Ascending aorta (tissue), 2 donors: ENCODE measurements at regions of chr17 and their contacts with region 1.

Region 1: GRCh38 chr17:75978938-75979704 is at the starts of genes ACOX1 and TEN1:
- DNase-seq: peak; percentile 89 to 98
- H3K4me3 ChIP-seq: peak within 1 kb of the TSS; percentile 76 to 88
- H3K27ac ChIP-seq: peak within 1 kb of the TSS; percentile 93 to 99
- H3K4me1 ChIP-seq: peaks cover 2 to 26% of the 10 kb centered on the region in 2 donors
- H3K27me3 ChIP-seq: no peaks in the 10 kb centered on the region
- CTCF ChIP-seq: peak; percentile 15 to 35 (median 33)
- total RNA-seq, gene ACOX1: 18.5 TPM
- total RNA-seq, gene TEN1: 33.6 TPM

Region 2: DNA sequence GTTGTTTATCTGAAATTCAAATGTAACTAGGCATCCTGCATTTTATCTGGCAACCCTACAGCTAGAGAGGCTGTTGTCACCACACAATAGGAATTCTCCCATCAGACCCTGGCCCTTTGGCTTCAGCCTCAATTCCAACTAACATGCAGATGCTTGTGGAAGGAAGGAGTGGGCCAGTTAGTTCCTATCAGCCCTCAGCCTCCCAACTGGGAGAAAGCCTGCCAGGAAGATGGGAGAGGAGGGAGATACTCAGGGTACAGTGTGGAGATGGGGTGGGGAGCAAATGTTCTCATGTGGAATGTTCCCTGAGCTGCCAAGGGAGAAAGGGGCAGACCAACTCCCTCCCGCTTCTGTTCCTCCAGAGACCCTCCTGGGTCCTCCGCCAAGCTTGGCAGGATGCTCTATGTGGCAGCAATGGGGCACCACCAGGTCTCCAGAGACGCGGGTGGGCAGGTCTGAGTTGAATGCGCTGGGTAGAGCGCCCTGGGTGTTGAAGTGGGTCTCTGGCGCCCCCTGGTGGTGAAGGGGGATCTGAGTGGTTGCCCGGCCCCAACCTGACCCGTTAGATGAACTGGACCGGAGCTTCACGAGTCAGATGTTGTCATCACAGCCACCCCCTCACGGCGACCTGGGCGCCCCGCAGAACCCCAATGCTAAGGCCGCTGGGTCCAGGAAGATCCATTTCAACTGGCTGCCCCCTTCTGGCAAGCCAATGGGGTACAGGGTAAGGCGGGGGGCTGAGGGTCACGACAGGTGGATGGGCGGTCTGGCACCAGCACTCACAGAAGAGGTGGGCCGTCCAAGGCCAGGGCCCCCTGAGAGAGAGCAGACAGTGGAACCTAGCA is 229.4 kb before region 1 on chr17:
- intact Hi-C with region 1: loop called (anchors 5 kb)
- DNase-seq: peak; percentile 59 to 92
- H3K4me3 ChIP-seq: peak overlapping the region in 1 of 2 donors; percentile 2
- H3K27ac ChIP-seq: no peak overlapping the region
- H3K4me1 ChIP-seq: peaks cover 10 to 11% of the 10 kb centered on the region in 2 donors
- H3K27me3 ChIP-seq: no peaks in the 10 kb centered on the region
- CTCF ChIP-seq: peak; percentile 88 to 96 (median 90)

Region 3: GRCh38 chr17:75896415-75897159 is 82.5 kb before region 1 on chr17 and contains the start of gene TRIM65:
- intact Hi-C with region 1: loop called (anchors 2 kb)
- DNase-seq: peak; percentile 41 to 94
- H3K4me3 ChIP-seq: peak within 1 kb of the TSS; percentile 87 to 96
- H3K27ac ChIP-seq: peak within 1 kb of the TSS; percentile 92 to 96
- H3K4me1 ChIP-seq: peaks cover 0 to 21% of the 10 kb centered on the region in 2 donors
- H3K27me3 ChIP-seq: no peaks in the 10 kb centered on the region
- CTCF ChIP-seq: peak; percentile 56 to 64 (median 58)
- total RNA-seq, gene TRIM65: 43.3 TPM

Region 4: DNA sequence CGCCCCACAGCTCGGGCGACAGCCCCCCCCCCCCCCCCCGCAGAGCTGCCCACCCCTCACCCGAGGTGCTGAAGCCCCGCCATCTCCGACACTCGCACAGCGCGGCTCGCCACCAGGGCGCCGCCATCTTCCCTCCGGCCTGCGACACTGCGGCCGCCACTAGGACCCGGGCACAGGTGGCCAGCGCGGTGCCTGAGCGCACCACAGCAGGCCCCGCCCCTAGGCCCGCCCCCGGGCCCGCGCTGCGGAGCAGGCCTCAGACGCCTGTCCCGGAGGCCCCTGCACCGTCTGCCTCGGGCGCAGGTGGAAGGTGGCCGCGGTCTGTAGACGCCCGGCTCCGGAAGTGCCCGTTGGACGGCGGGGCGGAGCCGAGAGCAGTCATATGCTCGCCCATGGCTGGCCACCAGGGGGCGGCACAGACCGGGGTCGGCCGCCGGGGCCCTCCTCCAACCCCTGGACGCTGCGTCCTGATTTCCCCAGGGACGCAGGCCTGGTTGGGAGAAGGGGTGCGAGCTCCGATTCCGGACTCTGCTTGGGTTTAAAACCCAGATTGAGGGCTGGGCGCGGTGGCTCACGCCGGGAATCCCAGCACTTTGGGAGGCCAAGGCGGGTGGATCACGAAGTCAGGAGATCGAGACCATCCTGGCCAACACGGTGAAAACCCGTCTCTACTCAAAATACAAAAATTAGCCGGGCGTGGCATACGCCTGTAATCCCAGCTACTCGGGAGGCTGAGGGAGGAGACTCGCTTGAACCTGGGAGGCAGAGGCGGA is 74.2 kb before region 1 on chr17 and contains the start of gene MRPL38:
- intact Hi-C with region 1: loop called (anchors 2 kb)
- DNase-seq: peak; percentile 73 to 96
- H3K4me3 ChIP-seq: peak within 1 kb of the TSS; percentile 74 to 79
- H3K27ac ChIP-seq: peak within 1 kb of the TSS; percentile 85 to 94
- H3K4me1 ChIP-seq: peaks cover 5 to 6% of the 10 kb centered on the region in 2 donors
- H3K27me3 ChIP-seq: no peaks in the 10 kb centered on the region
- CTCF ChIP-seq: peak; percentile 98 to 100 (median 99)
- total RNA-seq, gene MRPL38: 31.9 TPM

Region 5: GRCh38 chr17:75940724-75941441 is 38.2 kb before region 1 on chr17 and contains the start of gene FBF1:
- intact Hi-C with region 1: loop called (anchors 1 kb)
- DNase-seq: peak; percentile 76 to 97
- H3K4me3 ChIP-seq: peak within 1 kb of the TSS; percentile 84 to 97
- H3K27ac ChIP-seq: peak within 1 kb of the TSS; percentile 72 to 76
- H3K4me1 ChIP-seq: peaks cover 0 to 8% of the 10 kb centered on the region in 2 donors
- H3K27me3 ChIP-seq: no peaks in the 10 kb centered on the region
- CTCF ChIP-seq: peak in 1 of 3 experiments; percentile 7
- total RNA-seq, gene FBF1: 8.9 TPM

Region 6: GRCh38 chr17:76264755-76265596 is 285.9 kb after region 1 on chr17 and contains the start of gene UBALD2:
- intact Hi-C with region 1: loop called (anchors 10 kb)
- DNase-seq: peak; percentile 99 to 100
- H3K4me3 ChIP-seq: peak within 1 kb of the TSS; percentile 74 to 95
- H3K27ac ChIP-seq: peak within 1 kb of the TSS; percentile 89 to 90
- H3K4me1 ChIP-seq: peaks cover 0 to 26% of the 10 kb centered on the region in 2 donors
- H3K27me3 ChIP-seq: no peaks in the 10 kb centered on the region
- CTCF ChIP-seq: no peak
- total RNA-seq, gene UBALD2: 15.9 TPM

Region 7: DNA sequence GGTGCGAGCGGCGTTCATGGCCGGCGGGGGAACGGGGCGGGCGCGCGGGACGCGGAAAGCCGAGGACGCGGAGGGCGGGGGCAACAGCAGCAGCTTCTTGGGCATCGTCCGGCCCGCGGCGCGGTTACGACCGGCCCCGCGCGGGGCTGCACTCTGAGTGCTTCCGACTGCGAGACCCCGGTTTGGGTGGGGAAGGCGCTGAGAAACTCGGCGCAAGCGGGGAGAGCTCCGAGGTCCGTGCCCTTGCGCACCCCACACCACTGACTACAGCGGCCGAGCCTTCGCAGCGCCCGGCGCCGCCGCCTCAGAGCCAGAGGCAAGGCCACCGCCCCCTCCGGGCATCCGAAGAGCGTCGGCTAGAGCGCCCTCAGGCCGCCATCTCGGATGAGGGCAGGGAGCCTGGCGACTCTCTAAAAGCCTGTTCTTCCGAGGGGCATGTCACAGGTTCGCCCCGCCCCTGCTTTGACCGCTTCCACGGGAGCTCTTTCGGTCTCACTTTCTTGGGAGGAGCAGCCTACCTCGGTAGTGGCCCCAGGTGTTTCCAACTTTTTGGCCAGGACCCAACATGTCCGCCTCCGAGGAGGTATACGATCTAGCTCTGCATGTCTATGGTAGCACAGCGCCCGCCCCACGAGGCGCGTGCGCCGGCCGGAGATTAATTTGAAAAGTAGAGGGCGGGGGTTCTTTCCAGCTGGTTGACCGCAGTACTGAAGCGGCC is 374.6 kb after region 1 on chr17 and contains the start of gene PRPSAP1:
- intact Hi-C with region 1: loop called (anchors 5 kb)
- DNase-seq: peak; percentile 41 to 90
- H3K4me3 ChIP-seq: peak within 1 kb of the TSS; percentile 97
- H3K27ac ChIP-seq: peak within 1 kb of the TSS; percentile 83 to 88
- H3K4me1 ChIP-seq: peaks cover 0 to 16% of the 10 kb centered on the region in 2 donors
- H3K27me3 ChIP-seq: no peaks in the 10 kb centered on the region
- CTCF ChIP-seq: peak; percentile 43 to 73 (median 69)
- total RNA-seq, gene PRPSAP1: 16.1 TPM